CD8-positive, alpha-beta memory T cell (primary cell): ENCODE measurements at regions of chr11 and their contacts with region 1.

Region 1: GRCh38 chr11:65111744-65112414 is at the start of gene TM7SF2:
- DNase-seq: peak; percentile 89 to 96 (median 94)
- H3K4me3 ChIP-seq: peak within 1 kb of the TSS; percentile 81
- H3K4me3 Mint-ChIP-seq: peak within 1 kb of the TSS; percentile 83 to 90 (median 87)
- H3K27ac ChIP-seq: peak within 1 kb of the TSS; percentile 65
- H3K27ac Mint-ChIP-seq: peak within 1 kb of the TSS; percentile 67 to 94 (median 86)
- H3K4me1 ChIP-seq: peaks cover 48% of the 10 kb centered on the region
- H3K4me1 Mint-ChIP-seq: peaks cover 30 to 57% (median 30%) of the 10 kb centered on the region in 3 donors
- H3K27me3 ChIP-seq: no peaks in the 10 kb centered on the region
- H3K27me3 Mint-ChIP-seq: peaks cover 0 to 2% of the 10 kb centered on the region in 2 donors
- total RNA-seq, gene TM7SF2: 17.8 to 17.9 TPM

Region 2: GRCh38 chr11:65083834-65084597 is 27.9 kb before region 1 on chr11 and contains the starts of genes CDCA5 and ZFPL1:
- CTCF ChIA-PET with region 1: interaction called, 13 read pairs
- POLR2A ChIA-PET with region 1: no interaction called
- DNase-seq: peak; percentile 93 to 97 (median 96)
- H3K4me3 ChIP-seq: peak within 1 kb of the TSS; percentile 86
- H3K4me3 Mint-ChIP-seq: peak within 1 kb of the TSS; percentile 91 to 96 (median 92)
- H3K27ac ChIP-seq: peak within 1 kb of the TSS; percentile 91
- H3K27ac Mint-ChIP-seq: peak within 1 kb of the TSS; percentile 96 to 99 (median 97)
- H3K4me1 ChIP-seq: peaks cover 26% of the 10 kb centered on the region
- H3K4me1 Mint-ChIP-seq: peaks cover 23 to 32% (median 28%) of the 10 kb centered on the region in 3 donors
- H3K27me3 ChIP-seq: no peaks in the 10 kb centered on the region
- H3K27me3 Mint-ChIP-seq: peaks cover 0 to 2% of the 10 kb centered on the region in 2 donors
- total RNA-seq, gene CDCA5: 94.9 to 98.8 TPM
- total RNA-seq, gene ZFPL1: 30.8 to 33.5 TPM

Region 3: GRCh38 chr11:65095974-65096806 is 15.7 kb before region 1 on chr11 and contains the start of gene VPS51:
- CTCF ChIA-PET with region 1: interaction called, 104 read pairs
- POLR2A ChIA-PET with region 1: interaction called, 9 read pairs
- DNase-seq: peak; percentile 70 to 90 (median 85)
- H3K4me3 ChIP-seq: peak within 1 kb of the TSS; percentile 93
- H3K4me3 Mint-ChIP-seq: peak within 1 kb of the TSS; percentile 92 to 97 (median 94)
- H3K27ac ChIP-seq: peak within 1 kb of the TSS; percentile 82
- H3K27ac Mint-ChIP-seq: peak within 1 kb of the TSS; percentile 76 to 98 (median 94)
- H3K4me1 ChIP-seq: peaks cover 22% of the 10 kb centered on the region
- H3K4me1 Mint-ChIP-seq: peaks cover 13 to 28% (median 19%) of the 10 kb centered on the region in 3 donors
- H3K27me3 ChIP-seq: no peaks in the 10 kb centered on the region
- H3K27me3 Mint-ChIP-seq: no peaks in the 10 kb centered on the region
- total RNA-seq, gene VPS51: 120 to 131 TPM

Region 4: DNA sequence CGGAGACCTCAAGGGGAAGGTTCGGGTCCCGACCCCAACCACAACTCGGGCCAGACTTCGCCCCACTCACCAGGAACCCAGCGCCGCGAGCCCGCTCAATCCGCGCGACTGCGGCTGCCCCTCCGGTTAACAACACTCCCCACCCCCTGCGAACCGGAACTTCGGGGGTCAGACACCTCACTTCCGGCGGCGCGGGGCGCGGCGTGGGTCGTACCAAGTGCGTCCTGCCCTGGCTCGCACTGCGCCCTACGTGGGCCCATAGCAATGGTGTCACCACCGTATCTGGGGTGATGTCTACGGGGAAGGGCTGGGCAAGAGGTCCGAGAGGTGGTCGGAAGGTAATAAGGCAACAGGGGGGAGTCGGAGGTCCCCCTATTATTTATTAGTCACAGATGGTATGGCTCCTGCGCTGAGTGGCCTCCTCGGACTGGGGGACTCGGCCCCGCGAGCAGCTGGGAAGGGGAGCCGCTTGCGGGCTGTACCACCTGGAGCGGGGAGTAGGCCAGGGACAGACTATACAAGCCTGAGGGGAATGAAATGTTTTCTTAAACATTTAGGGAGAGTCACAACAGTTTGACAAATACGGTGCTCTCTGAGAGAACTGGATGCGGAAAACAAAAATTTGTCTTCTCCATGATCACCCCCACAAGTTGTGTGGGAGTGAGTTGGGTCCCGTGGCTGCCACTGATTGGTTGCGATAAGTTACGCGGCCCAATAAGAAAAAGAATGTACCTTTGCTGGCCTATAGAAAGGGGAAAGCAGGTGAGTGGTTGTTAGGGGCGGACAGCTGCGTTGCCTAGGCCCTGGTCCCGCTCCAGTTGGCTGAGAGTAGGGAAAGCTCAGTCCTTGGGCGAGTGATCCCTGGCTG is 22.7 kb after region 1 on chr11 and contains the start of gene SYVN1:
- CTCF ChIA-PET with region 1: interaction called, 10 read pairs
- POLR2A ChIA-PET with region 1: interaction called, 27 read pairs
- DNase-seq: peak; percentile 86 to 95 (median 91)
- H3K4me3 ChIP-seq: peak within 1 kb of the TSS; percentile 99
- H3K4me3 Mint-ChIP-seq: peak within 1 kb of the TSS; percentile 94 to 100 (median 98)
- H3K27ac ChIP-seq: peak within 1 kb of the TSS; percentile 100
- H3K27ac Mint-ChIP-seq: peak within 1 kb of the TSS; percentile 98 to 100 (median 100)
- H3K4me1 ChIP-seq: peaks cover 31% of the 10 kb centered on the region
- H3K4me1 Mint-ChIP-seq: peaks cover 35 to 52% (median 36%) of the 10 kb centered on the region in 3 donors
- H3K27me3 ChIP-seq: no peaks in the 10 kb centered on the region
- H3K27me3 Mint-ChIP-seq: peaks cover 0 to 4% of the 10 kb centered on the region in 2 donors
- total RNA-seq, gene SYVN1: 35.1 to 39.7 TPM

Region 5: DNA sequence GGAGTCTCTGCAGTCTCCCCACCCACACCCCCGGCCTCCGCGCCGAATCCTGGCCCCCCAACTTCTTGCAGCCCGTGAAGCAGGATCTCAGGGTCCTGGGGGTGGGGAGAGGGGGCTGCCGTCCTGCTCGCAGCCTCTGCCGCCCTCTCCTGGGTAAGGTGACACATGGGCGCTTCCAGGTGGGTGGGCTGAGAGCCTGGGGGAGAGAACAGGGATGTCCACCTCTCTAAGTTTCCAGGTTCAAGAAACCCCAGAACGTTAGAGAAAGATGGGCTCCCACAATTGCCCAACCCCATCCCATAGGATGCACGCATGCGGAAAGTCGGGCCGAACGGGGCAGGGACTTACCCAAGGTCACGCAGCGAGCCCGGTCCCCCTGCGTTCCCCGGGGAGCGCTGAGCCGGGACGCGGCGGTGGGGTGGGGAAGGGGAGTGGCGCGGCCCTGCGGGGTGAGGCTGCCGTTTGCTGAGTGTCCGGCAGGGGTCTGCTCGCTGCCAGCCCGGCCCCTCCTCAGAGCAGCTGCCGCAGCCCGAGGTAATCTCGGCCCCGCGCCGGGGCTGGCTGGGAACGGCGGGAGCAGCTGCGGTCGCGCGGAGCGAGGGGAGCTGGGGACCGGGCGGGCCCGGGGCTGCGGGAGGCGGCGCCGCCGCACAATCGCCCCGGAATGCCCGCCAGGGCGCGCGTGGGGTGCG is 69.1 kb after region 1 on chr11:
- CTCF ChIA-PET with region 1: interaction called, 13 read pairs
- POLR2A ChIA-PET with region 1: interaction called, 3 read pairs
- DNase-seq: peak; percentile 35 to 67 (median 50)
- H3K4me3 ChIP-seq: peak overlapping the region; percentile 76
- H3K4me3 Mint-ChIP-seq: peak overlapping the region; percentile 89 to 97 (median 93)
- H3K27ac ChIP-seq: peak overlapping the region; percentile 41
- H3K27ac Mint-ChIP-seq: peak overlapping the region in 7 of 8 donors; percentile 50 to 92 (median 78)
- H3K4me1 ChIP-seq: peaks cover 20% of the 10 kb centered on the region
- H3K4me1 Mint-ChIP-seq: peaks cover 19 to 43% (median 32%) of the 10 kb centered on the region in 3 donors
- H3K27me3 ChIP-seq: no peaks in the 10 kb centered on the region
- H3K27me3 Mint-ChIP-seq: no peaks in the 10 kb centered on the region